ENCODE measurements at regions of chr4 and their contacts with region 1.

Region 1: DNA sequence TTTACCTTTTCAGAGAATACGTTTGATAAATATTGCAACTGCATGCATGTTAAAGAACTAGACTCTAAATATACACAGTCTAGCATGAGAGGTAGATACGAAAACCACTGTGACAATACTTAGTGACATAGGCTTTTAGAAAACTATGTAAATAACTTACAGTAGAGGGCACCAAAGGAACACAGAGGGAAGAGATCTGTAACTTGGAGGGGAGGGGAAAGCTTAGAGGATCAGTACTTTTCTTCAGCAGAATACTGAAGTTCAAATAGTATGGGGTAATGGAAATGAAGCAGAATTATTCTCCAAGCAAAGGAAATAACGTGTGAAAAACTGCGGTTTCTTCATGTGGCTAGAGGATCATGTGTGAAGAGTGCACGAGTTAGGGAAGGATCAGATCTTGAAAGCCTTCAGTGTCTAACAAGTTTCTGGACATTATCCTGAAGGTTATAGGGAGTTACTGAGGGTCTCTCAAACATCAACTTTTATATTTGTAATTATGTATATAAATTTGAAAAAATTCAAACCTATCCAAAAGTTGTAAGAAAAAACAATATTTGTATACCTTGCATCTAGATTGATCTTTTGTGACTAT is 264.3 kb downstream of the NPFFR2 start:
- DNase-seq: no peak
- H3K4me3 ChIP-seq: no peak overlapping the region
- H3K27ac ChIP-seq: no peak overlapping the region
- H3K4me1 ChIP-seq: no peaks in the 10 kb centered on the region
- H3K27me3 ChIP-seq: no peaks in the 10 kb centered on the region
- CTCF ChIP-seq: peak in 3 of 4 experiments; percentile 25 to 70 (median 56)
- POLR2A ChIP-seq: no peak

Region 2: DNA sequence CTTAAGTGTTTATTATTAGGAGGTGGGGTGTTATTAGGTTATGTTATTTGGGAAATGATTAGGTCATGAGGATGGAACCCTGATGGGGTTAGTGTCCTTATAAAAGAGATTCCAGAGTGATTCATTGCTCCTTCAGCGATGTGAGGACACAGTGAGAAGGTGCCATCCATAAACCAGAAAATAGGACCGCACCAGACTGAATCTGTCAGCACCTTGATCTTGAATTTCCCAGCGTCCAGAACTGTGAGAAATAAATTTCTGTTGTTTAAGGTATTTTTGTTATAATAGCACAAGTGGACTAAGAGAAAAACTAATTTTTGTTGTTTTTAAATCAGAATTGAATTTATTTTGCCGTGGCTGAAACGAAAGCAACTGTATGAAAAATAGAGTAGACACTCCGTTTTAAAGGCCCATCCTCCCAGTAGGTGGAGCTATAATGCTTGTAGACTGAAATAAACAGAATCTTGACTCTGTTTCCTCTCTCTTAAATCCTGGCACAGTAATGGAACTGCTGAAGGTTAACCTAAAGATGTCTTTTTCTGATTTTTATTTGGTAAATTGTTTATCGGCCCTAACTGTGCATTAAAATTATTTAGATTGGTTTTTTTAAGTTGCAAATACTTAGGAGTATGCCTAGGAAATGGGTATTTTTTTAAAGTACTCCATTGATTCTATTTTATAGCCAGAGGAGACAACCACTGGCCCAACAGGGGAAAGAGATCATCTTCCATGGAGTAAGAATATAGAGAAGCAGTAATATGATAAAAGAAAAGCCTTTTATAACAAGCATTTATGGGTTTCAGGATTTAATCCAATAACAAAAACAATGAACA is 406.1 kb after region 1 on chr4:
- intact Hi-C with region 1: loop called (anchors 5 kb)
- DNase-seq: peak; percentile 43
- H3K4me3 ChIP-seq: peak overlapping the region; percentile 11 to 21
- H3K27ac ChIP-seq: no peak overlapping the region
- H3K4me1 ChIP-seq: no peaks in the 10 kb centered on the region
- H3K27me3 ChIP-seq: no peaks in the 10 kb centered on the region
- CTCF ChIP-seq: peak; percentile 35 to 68 (median 64)
- POLR2A ChIP-seq: no peak